Activated CD4-positive, alpha-beta T cell treated with anti-CD3 and anti-CD28 coated beads for 36 hours (primary cell): ENCODE measurements at regions of chr22 and their contacts with region 1.

Region 1: GRCh38 chr22:19854778-19855503 is at the starts of genes GNB1L and RTL10:
- DNase-seq: peak; percentile 98
- ATAC-seq: peak; percentile 93
- H3K4me3 Mint-ChIP-seq: peak within 1 kb of the TSS; percentile 89
- H3K27ac Mint-ChIP-seq: peak within 1 kb of the TSS; percentile 97
- H3K4me1 Mint-ChIP-seq: peaks cover 51% of the 10 kb centered on the region
- H3K27me3 Mint-ChIP-seq: no peaks in the 10 kb centered on the region
- total RNA-seq, gene GNB1L: 7.6 to 12.4 TPM
- total RNA-seq, gene RTL10: 14.9 to 15.6 TPM

Region 2: DNA sequence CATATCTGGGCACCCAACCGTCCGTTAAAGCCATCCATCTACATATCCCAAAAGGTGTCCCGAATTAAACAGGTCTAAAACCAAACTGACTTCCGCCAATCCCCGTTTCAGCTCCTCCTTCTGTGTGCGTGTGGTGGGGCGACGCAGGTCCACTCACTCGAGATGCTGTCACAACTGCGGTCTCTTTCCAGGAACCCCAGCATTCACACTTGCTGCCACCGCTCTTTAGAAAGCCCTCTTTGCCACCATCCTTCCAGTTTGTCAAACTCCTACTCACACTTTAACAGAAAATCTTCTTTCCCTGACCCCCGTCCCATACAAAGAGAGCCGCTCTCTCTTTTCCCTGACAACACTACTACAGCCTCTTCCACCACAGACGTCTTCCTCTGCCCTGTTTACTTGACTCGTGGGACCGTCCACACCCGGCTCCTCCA is 711.0 kb before region 1 on chr22:
- CTCF ChIA-PET with region 1: no interaction called
- POLR2A ChIA-PET with region 1: no interaction called
- intact Hi-C with region 1: loop called in 1 of 2 experiments (anchors 10 kb)
- DNase-seq: peak; percentile 69
- ATAC-seq: peak; percentile 37
- H3K4me3 Mint-ChIP-seq: peak overlapping the region; percentile 95
- H3K27ac Mint-ChIP-seq: peak overlapping the region; percentile 96
- H3K4me1 Mint-ChIP-seq: peaks cover 18% of the 10 kb centered on the region
- H3K27me3 Mint-ChIP-seq: peaks cover 5% of the 10 kb centered on the region

Region 3: DNA sequence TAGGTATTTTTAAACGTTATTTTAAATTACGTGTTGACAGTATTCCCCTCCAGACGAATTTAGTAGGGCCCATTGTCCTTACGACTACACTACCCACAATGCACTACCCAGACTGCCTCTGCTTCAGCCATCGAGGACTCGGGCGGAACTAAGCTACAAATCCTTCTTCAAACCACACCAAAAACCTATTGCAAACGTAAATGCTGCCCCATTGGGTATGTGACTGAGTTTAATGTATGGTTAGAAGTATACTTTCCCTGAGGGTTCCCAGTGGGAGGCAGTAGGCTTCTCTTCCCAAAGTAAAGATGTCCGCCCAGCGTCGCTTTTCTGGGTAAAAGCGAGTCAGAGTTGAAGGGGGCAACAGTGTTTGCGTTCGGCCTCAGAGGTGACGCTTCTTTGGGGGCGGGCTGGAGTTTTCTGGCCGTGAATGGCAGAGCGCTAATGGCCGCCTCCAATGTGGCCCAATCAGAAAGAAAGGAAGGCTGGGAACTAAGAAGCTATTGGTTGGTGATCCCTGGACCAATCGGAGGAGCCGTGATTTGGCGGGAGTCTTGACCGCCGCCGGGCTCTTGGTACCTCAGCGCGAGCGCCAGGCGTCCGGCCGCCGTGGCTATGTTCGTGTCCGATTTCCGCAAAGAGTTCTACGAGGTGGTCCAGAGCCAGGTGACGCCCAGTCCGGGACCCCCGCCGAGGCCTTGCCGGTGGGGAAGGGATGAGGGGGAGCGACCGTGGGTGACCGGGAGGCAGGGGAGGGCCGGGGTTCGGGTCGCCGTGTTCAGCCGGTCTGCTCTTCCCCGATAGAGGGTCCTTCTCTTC is 375.4 kb before region 1 on chr22 and contains the start of gene CDC45:
- CTCF ChIA-PET with region 1: no interaction called
- POLR2A ChIA-PET with region 1: no interaction called
- intact Hi-C with region 1: loop called in 1 of 2 experiments (anchors 1 kb)
- DNase-seq: peak; percentile 97
- ATAC-seq: peak; percentile 91
- H3K4me3 Mint-ChIP-seq: peak within 1 kb of the TSS; percentile 99
- H3K27ac Mint-ChIP-seq: peak within 1 kb of the TSS; percentile 99
- H3K4me1 Mint-ChIP-seq: peaks cover 45% of the 10 kb centered on the region
- H3K27me3 Mint-ChIP-seq: no peaks in the 10 kb centered on the region
- total RNA-seq, gene CDC45: 103 to 111 TPM

Region 4: DNA sequence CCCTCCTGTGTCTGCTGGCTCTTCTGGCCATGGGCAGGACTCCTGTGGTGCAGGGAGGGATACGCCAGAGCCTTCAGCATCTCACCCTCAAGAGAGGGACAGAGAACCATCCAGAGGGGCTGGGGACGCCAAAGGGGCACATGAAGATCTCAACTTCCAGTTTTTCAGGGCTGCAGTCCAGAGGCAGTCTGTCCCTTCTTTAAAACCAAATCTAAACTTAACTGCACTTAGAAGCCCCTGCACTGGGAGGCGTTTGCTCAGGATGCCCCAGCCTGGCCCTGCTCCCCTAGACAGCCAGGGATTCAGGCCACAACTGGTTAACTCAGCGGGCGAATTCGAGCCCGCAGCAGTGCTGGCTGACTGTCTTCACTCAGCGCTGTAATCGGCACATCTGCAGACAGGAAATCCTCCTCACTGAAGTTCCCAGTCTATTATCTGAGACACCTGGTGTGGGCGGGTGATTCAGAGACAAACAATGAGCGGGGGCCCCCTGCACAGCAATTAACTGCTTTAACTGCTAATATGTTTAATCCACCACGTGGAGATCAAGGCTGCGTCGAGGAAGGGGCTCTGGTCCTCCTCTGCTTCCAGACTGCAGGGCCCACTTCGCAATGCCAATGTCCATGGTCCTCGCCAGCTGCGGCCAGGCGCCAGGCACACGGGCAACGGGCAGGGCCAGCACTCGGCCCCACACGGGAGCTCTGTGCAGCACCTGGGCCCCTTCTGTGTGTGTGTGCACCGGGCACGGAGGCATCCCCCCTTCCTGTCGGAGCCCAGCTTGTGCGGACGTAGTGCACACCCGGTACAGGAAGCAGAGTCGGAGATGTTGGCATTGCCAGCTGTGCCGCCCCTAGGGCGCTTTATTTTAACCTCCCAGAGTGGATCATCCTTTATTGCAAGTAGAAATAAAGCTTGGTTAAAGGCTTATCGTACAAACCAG is 36.6 kb after region 1 on chr22:
- CTCF ChIA-PET with region 1: interaction called, 6 read pairs
- POLR2A ChIA-PET with region 1: interaction called, 11 read pairs
- intact Hi-C with region 1: loop called (anchors 1 kb)
- DNase-seq: peak; percentile 92
- ATAC-seq: peak; percentile 75
- H3K4me3 Mint-ChIP-seq: peak overlapping the region; percentile 72
- H3K27ac Mint-ChIP-seq: peak overlapping the region; percentile 95
- H3K4me1 Mint-ChIP-seq: peaks cover 86% of the 10 kb centered on the region
- H3K27me3 Mint-ChIP-seq: no peaks in the 10 kb centered on the region

Region 5: GRCh38 chr22:20016734-20017621 is 162.0 kb after region 1 on chr22 and contains the start of gene ARVCF:
- CTCF ChIA-PET with region 1: no interaction called
- POLR2A ChIA-PET with region 1: no interaction called
- intact Hi-C with region 1: loop called in 1 of 2 experiments (anchors 2 kb)
- DNase-seq: peak; percentile 94
- ATAC-seq: peak; percentile 72
- H3K4me3 Mint-ChIP-seq: peak within 1 kb of the TSS; percentile 78
- H3K27ac Mint-ChIP-seq: peak within 1 kb of the TSS; percentile 25
- H3K4me1 Mint-ChIP-seq: peaks cover 15% of the 10 kb centered on the region
- H3K27me3 Mint-ChIP-seq: peaks cover 6% of the 10 kb centered on the region
- total RNA-seq, gene ARVCF: 1.3 to 2.1 TPM

Region 6: GRCh38 chr22:20319745-20320658 is 465.1 kb after region 1 on chr22 and contains the start of gene DGCR6L:
- CTCF ChIA-PET with region 1: no interaction called
- POLR2A ChIA-PET with region 1: no interaction called
- intact Hi-C with region 1: loop called in 1 of 2 experiments (anchors 10 kb)
- DNase-seq: peak; percentile 99
- ATAC-seq: peak; percentile 53
- H3K4me3 Mint-ChIP-seq: peak within 1 kb of the TSS; percentile 85
- H3K27ac Mint-ChIP-seq: peak within 1 kb of the TSS; percentile 79
- H3K4me1 Mint-ChIP-seq: peaks cover 55% of the 10 kb centered on the region
- H3K27me3 Mint-ChIP-seq: no peaks in the 10 kb centered on the region
- total RNA-seq, gene DGCR6L: 22.4 to 24.8 TPM